Caco-2 (cell line): ENCODE measurements at regions of chr13 and their contacts with region 1.

Region 1: GRCh38 chr13:98653463-98653985 is 76.6 kb upstream of the STK24 start:
- DNase-seq: peak; percentile 92 to 93
- H3K4me3 ChIP-seq: no peak overlapping the region
- H3K4me3 Mint-ChIP-seq: peak overlapping the region; percentile 31
- H3K27ac Mint-ChIP-seq: peak overlapping the region; percentile 96
- H3K4me1 ChIP-seq: peaks cover 60% of the 10 kb centered on the region
- H3K4me1 Mint-ChIP-seq: peaks cover 70% of the 10 kb centered on the region
- H3K27me3 ChIP-seq: no peaks in the 10 kb centered on the region
- H3K27me3 Mint-ChIP-seq: no peaks in the 10 kb centered on the region
- CTCF ChIP-seq: peak; percentile 89 to 95

Region 2: GRCh38 chr13:98445340-98446233 is 207.9 kb before region 1 on chr13:
- CTCF ChIA-PET with region 1: interaction called, 13 read pairs
- POLR2A ChIA-PET with region 1: no interaction called
- intact Hi-C with region 1: loop called (anchors 1 kb)
- DNase-seq: peak; percentile 77 to 88
- H3K4me3 ChIP-seq: no peak overlapping the region
- H3K4me3 Mint-ChIP-seq: no peak overlapping the region
- H3K27ac Mint-ChIP-seq: peak overlapping the region; percentile 77
- H3K4me1 ChIP-seq: no peaks in the 10 kb centered on the region
- H3K4me1 Mint-ChIP-seq: peaks cover 14% of the 10 kb centered on the region
- H3K27me3 ChIP-seq: no peaks in the 10 kb centered on the region
- H3K27me3 Mint-ChIP-seq: no peaks in the 10 kb centered on the region
- CTCF ChIP-seq: peak; percentile 97 to 99

Region 3: DNA sequence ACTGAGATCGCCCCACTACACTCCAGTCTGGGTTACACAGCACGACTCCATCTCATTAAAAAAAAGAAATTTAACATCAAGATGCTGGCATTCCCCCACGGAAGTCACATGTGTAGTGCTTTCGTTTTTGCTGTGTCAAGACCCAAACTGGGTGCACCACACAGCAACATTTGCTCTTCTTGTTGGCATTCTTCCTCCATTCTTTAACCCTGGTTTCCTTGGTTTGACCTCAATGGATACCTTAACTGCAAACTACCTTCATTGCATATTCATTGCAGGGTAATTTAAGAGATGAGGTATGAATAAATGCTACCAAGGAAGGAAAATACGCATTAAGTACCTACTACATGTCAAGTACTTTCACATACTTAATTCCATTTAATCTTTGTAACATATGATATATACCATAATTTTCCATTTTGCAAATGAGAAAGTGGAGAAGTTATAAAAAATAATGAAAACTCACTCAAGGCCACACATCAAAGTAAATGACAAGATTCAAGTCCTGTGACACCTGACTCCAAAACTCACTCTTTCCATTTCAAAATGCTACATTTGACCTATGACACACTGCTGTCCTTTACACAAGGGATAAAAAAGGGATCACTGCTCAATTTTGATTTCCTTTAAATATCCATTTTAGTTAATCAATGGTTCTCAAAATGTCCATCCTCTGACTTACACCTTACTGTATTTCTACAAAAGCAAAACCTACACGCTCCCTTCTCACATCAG is 135.8 kb before region 1 on chr13:
- CTCF ChIA-PET with region 1: interaction called, 11 read pairs
- POLR2A ChIA-PET with region 1: no interaction called
- intact Hi-C with region 1: no loop called
- DNase-seq: no peak
- H3K4me3 ChIP-seq: no peak overlapping the region
- H3K4me3 Mint-ChIP-seq: no peak overlapping the region
- H3K27ac Mint-ChIP-seq: no peak overlapping the region
- H3K4me1 ChIP-seq: no peaks in the 10 kb centered on the region; the same call in 1 of the 2 replicates
- H3K4me1 Mint-ChIP-seq: peaks cover 23% of the 10 kb centered on the region
- H3K27me3 ChIP-seq: no peaks in the 10 kb centered on the region
- H3K27me3 Mint-ChIP-seq: no peaks in the 10 kb centered on the region
- CTCF ChIP-seq: no peak

Region 4: DNA sequence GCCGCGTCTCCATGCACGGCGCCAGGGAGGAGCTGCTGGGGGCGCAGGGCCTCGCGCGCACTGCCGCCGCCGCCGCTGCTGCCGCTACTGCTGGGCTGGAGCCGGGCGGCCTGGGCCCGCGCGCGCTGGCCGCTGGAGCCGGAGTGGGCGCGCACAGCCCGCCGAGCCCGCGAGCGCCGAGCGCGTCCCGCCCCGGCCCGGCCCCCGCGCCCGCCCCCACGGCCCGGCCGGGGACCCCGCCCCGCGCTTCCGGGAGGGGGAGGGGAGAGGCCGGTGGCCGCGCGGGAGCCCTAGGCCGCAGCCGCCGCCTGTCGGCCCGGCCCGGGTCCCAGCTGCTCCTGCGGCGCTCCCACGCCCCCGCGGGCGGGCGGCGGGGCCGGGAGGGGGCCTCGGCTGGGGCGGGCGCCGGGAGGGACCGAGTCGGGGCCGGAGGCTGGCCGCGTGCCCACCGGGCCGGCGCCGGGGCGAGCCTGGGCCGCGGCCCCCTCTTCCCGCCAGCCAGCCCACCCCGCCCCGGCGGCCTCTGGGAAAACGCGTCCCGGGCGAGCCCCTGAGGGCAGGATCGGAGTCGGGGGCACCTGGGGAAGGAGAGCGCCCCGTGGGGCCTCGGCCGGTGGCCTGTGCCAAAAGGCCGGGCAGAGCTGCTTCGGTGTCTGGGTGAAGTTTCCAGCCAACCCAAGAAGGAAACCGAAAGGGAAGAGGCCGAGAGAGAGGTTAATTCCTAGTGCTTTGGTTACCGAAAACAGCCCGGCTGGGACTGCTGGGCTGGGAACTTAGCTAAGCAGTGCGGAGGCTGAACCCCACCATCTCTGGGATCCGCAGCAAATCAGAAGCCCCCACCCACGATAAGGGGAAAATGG is 76.3 kb before region 1 on chr13 and contains the start of gene STK24:
- CTCF ChIA-PET with region 1: interaction called, 13 read pairs
- POLR2A ChIA-PET with region 1: interaction called, 6 read pairs
- intact Hi-C with region 1: loop called (anchors 1 kb)
- DNase-seq: peak; percentile 65 to 92
- H3K4me3 ChIP-seq: peak within 1 kb of the TSS; percentile 92
- H3K4me3 Mint-ChIP-seq: peak within 1 kb of the TSS; percentile 95
- H3K27ac Mint-ChIP-seq: peak within 1 kb of the TSS; percentile 97
- H3K4me1 ChIP-seq: peaks cover 61% of the 10 kb centered on the region
- H3K4me1 Mint-ChIP-seq: peaks cover 63% of the 10 kb centered on the region
- H3K27me3 ChIP-seq: no peaks in the 10 kb centered on the region
- H3K27me3 Mint-ChIP-seq: no peaks in the 10 kb centered on the region
- CTCF ChIP-seq: no peak
- total RNA-seq, gene STK24: 244 and 253 TPM in 2 replicates

Region 5: GRCh38 chr13:98606296-98606695 is 47.2 kb before region 1 on chr13:
- CTCF ChIA-PET with region 1: no interaction called
- POLR2A ChIA-PET with region 1: no interaction called
- intact Hi-C with region 1: loop called (anchors 1 kb)
- DNase-seq: peak; percentile 70 to 75
- H3K4me3 ChIP-seq: no peak overlapping the region
- H3K4me3 Mint-ChIP-seq: no peak overlapping the region
- H3K27ac Mint-ChIP-seq: no peak overlapping the region
- H3K4me1 ChIP-seq: peaks cover 9% of the 10 kb centered on the region
- H3K4me1 Mint-ChIP-seq: peaks cover 4% of the 10 kb centered on the region
- H3K27me3 ChIP-seq: no peaks in the 10 kb centered on the region
- H3K27me3 Mint-ChIP-seq: no peaks in the 10 kb centered on the region
- CTCF ChIP-seq: no peak

Region 6: GRCh38 chr13:98672944-98673545 is 19.5 kb after region 1 on chr13:
- CTCF ChIA-PET with region 1: interaction called, 15 read pairs
- POLR2A ChIA-PET with region 1: interaction called, 3 read pairs
- intact Hi-C with region 1: loop called (anchors 1 kb)
- DNase-seq: peak; percentile 87 to 91
- H3K4me3 ChIP-seq: no peak overlapping the region
- H3K4me3 Mint-ChIP-seq: peak overlapping the region; percentile 14
- H3K27ac Mint-ChIP-seq: peak overlapping the region; percentile 23
- H3K4me1 ChIP-seq: peaks cover 17% of the 10 kb centered on the region
- H3K4me1 Mint-ChIP-seq: peaks cover 8% of the 10 kb centered on the region
- H3K27me3 ChIP-seq: no peaks in the 10 kb centered on the region
- H3K27me3 Mint-ChIP-seq: no peaks in the 10 kb centered on the region
- CTCF ChIP-seq: peak; percentile 88